Aorta (tissue), 5 donors: ENCODE measurements at regions of chr12 and their contacts with region 1.

Region 1: GRCh38 chr12:59861635-59862034 is 265.8 kb downstream of the SLC16A7 start:
- DNase-seq: no peak
- ATAC-seq: no peak
- H3K4me3 ChIP-seq: no peak overlapping the region
- H3K27ac ChIP-seq: no peak overlapping the region
- H3K4me1 ChIP-seq: no peaks in the 10 kb centered on the region
- H3K27me3 ChIP-seq: no peaks in the 10 kb centered on the region

Region 2: GRCh38 chr12:60345442-60345841 is 483.8 kb after region 1 on chr12:
- intact Hi-C with region 1: loop called in 1 of 2 experiments (anchors 10 kb)
- DNase-seq: no peak
- ATAC-seq: no peak
- H3K4me3 ChIP-seq: no peak overlapping the region
- H3K27ac ChIP-seq: no peak overlapping the region
- H3K4me1 ChIP-seq: no peaks in the 10 kb centered on the region
- H3K27me3 ChIP-seq: no peaks in the 10 kb centered on the region